Activated CD4-positive, alpha-beta T cell treated with anti-CD3 and anti-CD28 coated beads for 36 hours (primary cell): ENCODE measurements at regions of chr1 and their contacts with region 1.

Region 1: DNA sequence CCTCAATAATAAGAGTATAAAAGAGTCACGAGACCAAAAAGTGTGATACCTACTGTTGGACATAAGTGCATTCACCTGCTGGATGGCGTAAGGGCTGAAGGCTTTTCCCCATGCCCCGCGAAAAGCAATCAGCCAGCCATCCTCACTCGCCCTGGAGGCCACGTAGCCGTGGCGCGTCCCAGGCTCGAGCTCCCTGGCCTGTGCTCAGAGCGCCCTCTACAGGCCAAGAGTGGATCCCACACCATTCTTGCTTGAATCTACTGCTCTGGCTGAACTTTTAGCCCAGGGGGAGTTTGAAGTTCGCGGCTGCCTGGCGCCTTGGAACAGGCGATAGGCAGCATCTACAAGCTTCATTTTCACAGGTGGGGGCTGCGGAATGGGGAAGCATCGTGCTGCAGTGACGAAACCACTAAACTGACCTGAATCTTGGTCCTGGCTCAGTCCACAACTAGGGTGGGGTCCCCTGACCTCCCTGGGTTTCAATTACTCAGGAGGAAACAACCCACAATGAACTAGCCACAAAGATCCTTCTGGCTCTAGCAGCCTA is 70.3 kb upstream of the SERBP1 start:
- DNase-seq: peak; percentile 95
- ATAC-seq: peak; percentile 100
- H3K4me3 Mint-ChIP-seq: no peak overlapping the region
- H3K27ac Mint-ChIP-seq: no peak overlapping the region
- H3K4me1 Mint-ChIP-seq: peaks cover 4% of the 10 kb centered on the region
- H3K27me3 Mint-ChIP-seq: peaks cover 1% of the 10 kb centered on the region

Region 2: DNA sequence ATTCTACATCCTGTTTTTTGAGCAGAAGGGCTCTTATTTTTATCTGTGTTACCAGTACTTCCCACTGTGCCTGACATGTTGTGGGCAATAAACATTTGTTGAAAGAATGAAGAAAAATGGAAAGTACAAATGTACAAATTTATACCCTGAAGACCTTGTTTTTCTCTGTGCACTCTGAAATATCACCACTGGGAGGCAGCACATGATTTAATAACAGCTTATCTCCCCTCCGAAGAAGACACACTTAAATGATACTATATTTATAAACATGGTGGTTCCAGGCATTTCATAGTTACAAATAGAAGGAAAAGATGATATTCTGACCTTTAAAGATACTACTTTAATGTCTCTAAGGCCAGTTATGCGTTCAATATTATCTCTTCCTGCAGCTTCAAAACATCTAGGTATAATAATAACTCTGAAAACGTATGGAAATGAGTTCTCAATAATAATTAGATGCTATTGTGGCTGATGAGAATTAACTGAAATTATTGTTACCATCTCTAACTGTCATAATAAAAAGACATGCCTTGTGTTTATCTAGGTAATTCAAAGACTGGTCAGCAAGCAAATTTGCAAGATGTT is 735.4 kb before region 1 on chr1:
- CTCF ChIA-PET with region 1: no interaction called
- POLR2A ChIA-PET with region 1: no interaction called
- intact Hi-C with region 1: loop called (anchors 2 to 10 kb)
- DNase-seq: peak; percentile 69
- ATAC-seq: peak; percentile 62
- H3K4me3 Mint-ChIP-seq: no peak overlapping the region
- H3K27ac Mint-ChIP-seq: no peak overlapping the region
- H3K4me1 Mint-ChIP-seq: peaks cover 22% of the 10 kb centered on the region
- H3K27me3 Mint-ChIP-seq: no peaks in the 10 kb centered on the region

Region 3: GRCh38 chr1:67149179-67149770 is 351.2 kb before region 1 on chr1:
- CTCF ChIA-PET with region 1: interaction called, 8 read pairs
- POLR2A ChIA-PET with region 1: no interaction called
- intact Hi-C with region 1: loop called in 1 of 2 experiments (anchors 10 kb)
- DNase-seq: peak; percentile 78
- ATAC-seq: peak; percentile 90
- H3K4me3 Mint-ChIP-seq: no peak overlapping the region
- H3K27ac Mint-ChIP-seq: peak overlapping the region; percentile 64
- H3K4me1 Mint-ChIP-seq: peaks cover 34% of the 10 kb centered on the region
- H3K27me3 Mint-ChIP-seq: peaks cover 16% of the 10 kb centered on the region

Region 4: GRCh38 chr1:67227196-67227595 is 273.3 kb before region 1 on chr1:
- CTCF ChIA-PET with region 1: interaction called, 12 read pairs
- POLR2A ChIA-PET with region 1: no interaction called
- intact Hi-C with region 1: no loop called
- DNase-seq: no peak
- ATAC-seq: no peak
- H3K4me3 Mint-ChIP-seq: no peak overlapping the region
- H3K27ac Mint-ChIP-seq: no peak overlapping the region
- H3K4me1 Mint-ChIP-seq: peaks cover 11% of the 10 kb centered on the region
- H3K27me3 Mint-ChIP-seq: no peaks in the 10 kb centered on the region

Region 5: GRCh38 chr1:67404212-67404620 is 96.3 kb before region 1 on chr1:
- CTCF ChIA-PET with region 1: interaction called, 5 read pairs
- POLR2A ChIA-PET with region 1: interaction called, 3 read pairs
- intact Hi-C with region 1: loop called in 1 of 2 experiments (anchors 5 kb)
- DNase-seq: no peak
- ATAC-seq: no peak
- H3K4me3 Mint-ChIP-seq: no peak overlapping the region
- H3K27ac Mint-ChIP-seq: no peak overlapping the region
- H3K4me1 Mint-ChIP-seq: peaks cover 19% of the 10 kb centered on the region
- H3K27me3 Mint-ChIP-seq: no peaks in the 10 kb centered on the region

Region 6: DNA sequence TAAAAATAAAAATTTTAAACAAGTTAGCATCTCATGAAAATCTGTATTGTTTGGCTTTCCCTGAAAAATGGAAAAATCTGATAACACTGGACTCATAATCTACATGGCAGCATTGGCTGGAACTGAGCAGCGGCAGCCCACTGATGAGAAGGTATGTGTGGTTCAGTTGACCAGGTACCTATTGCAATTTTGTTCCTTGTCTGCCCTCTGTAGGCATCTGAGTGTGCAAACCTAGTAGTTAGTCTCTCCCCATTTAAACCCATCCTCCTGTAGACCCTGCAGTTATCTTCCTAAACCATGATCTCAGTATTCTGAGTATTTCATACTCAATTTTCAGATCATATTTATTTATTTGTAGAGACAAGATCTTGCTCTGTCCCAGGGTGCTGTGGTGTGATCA is 10.8 kb before region 1 on chr1:
- CTCF ChIA-PET with region 1: interaction called, 19 read pairs
- POLR2A ChIA-PET with region 1: interaction called, 3 read pairs
- intact Hi-C with region 1: no loop called
- DNase-seq: peak; percentile 21
- ATAC-seq: peak; percentile 79
- H3K4me3 Mint-ChIP-seq: no peak overlapping the region
- H3K27ac Mint-ChIP-seq: no peak overlapping the region
- H3K4me1 Mint-ChIP-seq: peaks cover under 1% of the 10 kb centered on the region
- H3K27me3 Mint-ChIP-seq: no peaks in the 10 kb centered on the region